MCF 10A (cell line): ENCODE measurements at regions of chr10 and their contacts with region 1.

Region 1: DNA sequence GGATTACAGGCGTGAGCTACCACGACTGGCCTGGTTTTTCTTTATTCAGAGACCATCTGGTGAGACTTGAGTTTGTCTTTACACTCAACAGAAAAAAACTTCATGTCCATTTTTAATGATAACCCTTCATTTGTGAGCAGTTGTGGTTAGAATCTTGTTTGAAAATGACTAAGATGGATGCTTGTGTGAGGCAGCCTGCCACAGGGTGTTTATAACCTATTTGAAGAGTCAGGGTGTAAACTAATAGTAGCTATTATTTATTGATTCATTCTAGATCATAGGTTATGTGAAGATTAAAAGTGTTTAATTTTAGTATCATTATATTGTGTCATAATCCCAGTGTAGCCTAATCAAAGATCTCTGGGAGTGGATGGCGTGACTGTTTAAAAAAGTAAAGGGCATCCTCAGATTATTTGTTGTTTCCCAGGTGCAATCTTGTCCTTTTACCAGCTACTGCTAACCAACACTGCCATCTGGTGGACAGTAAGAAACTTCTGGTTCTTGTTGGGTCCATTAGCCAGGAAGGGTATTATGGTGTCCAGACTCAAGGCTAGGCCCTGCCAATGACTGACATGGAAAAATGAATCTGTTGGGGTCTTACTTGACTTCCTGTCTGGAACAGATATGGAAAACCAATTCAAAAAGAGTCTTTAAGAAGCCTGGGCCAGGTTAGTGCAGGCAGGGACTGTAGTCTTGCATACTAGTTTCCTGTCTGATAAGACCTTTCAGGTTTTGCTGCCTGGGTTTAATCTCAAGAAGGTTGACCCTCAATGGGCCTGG is 24.9 kb downstream of the NRBF2 start:
- DNase-seq: peak; percentile 89
- H3K4me3 Mint-ChIP-seq: no peak overlapping the region
- H3K27ac Mint-ChIP-seq: no peak overlapping the region
- H3K4me1 Mint-ChIP-seq: no peaks in the 10 kb centered on the region
- H3K27me3 Mint-ChIP-seq: no peaks in the 10 kb centered on the region
- CTCF ChIP-seq: peak; percentile 67

Region 2: GRCh38 chr10:62437696-62438095 is 720.3 kb before region 1 on chr10:
- CTCF ChIA-PET with region 1: interaction called, 33 read pairs
- POLR2A ChIA-PET with region 1: interaction called, 3 read pairs
- intact Hi-C with region 1: loop called (anchors 1 kb)
- DNase-seq: peak; percentile 64
- H3K4me3 Mint-ChIP-seq: no peak overlapping the region
- H3K27ac Mint-ChIP-seq: no peak overlapping the region
- H3K4me1 Mint-ChIP-seq: peaks cover 22% of the 10 kb centered on the region
- H3K27me3 Mint-ChIP-seq: no peaks in the 10 kb centered on the region
- CTCF ChIP-seq: peak; percentile 69

Region 3: DNA sequence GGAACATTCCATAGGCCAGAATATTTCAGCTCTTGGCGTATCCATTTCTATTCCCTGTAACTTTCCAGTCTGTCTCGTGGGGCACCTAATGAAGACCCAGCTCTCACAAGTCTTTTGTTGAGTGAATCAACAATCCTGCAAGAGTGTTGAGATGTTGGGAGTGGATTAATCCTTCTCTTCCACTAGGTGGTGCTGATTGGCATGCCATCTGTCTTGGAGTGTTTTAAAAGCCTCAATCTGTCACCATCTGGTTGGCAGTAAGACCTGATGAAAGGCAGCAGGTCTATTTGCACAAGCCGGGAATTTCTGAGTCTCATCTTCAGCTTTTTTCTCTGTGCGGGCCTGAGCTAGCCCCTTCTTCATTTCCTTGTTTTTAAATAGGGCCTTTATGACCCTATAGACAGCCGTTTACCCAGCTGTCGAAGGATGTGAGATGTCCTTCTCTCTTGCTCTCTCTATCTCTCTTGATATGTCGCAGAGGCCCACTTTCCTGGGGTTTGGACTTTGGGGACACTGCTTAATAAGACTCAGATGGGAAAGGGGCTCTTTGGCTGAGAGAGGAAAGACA is 603.3 kb before region 1 on chr10:
- CTCF ChIA-PET with region 1: interaction called, 5 read pairs
- POLR2A ChIA-PET with region 1: no interaction called
- intact Hi-C with region 1: loop called (anchors 1 kb)
- DNase-seq: peak; percentile 53
- H3K4me3 Mint-ChIP-seq: no peak overlapping the region
- H3K27ac Mint-ChIP-seq: no peak overlapping the region
- H3K4me1 Mint-ChIP-seq: no peaks in the 10 kb centered on the region
- H3K27me3 Mint-ChIP-seq: peaks cover 11% of the 10 kb centered on the region
- CTCF ChIP-seq: peak; percentile 35

Region 4: DNA sequence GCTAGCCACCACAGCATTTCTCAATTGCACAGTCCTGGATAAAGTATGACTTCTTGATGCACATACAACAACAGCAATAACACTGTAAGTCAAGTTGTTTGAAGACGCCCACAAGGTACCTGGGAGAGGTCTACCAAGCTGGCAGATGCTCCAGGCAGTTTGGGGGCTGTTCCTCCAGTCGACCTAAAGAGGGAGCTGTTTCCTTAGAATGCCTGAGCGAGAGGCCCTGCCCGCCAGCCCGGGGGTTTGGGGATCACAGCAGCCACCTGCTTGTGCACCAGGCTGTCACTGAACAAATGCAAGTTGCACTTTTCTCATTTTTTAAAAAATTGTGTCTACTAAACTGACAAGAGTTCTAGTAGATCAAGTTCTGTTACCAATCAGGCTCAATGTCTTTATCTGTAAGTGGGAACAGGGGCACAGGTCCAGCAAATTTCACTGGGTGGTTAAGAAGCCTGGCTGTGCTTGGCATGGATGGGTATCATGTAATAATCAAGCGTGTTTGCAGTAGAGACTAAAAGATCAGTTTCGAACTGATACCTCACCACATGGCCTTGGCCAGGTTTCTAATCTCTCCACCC is 547.3 kb before region 1 on chr10:
- CTCF ChIA-PET with region 1: interaction called, 16 read pairs
- POLR2A ChIA-PET with region 1: no interaction called
- intact Hi-C with region 1: loop called (anchors 1 kb)
- DNase-seq: peak; percentile 75
- H3K4me3 Mint-ChIP-seq: no peak overlapping the region
- H3K27ac Mint-ChIP-seq: no peak overlapping the region
- H3K4me1 Mint-ChIP-seq: peaks cover 5% of the 10 kb centered on the region
- H3K27me3 Mint-ChIP-seq: no peaks in the 10 kb centered on the region
- CTCF ChIP-seq: peak; percentile 87

Region 5: DNA sequence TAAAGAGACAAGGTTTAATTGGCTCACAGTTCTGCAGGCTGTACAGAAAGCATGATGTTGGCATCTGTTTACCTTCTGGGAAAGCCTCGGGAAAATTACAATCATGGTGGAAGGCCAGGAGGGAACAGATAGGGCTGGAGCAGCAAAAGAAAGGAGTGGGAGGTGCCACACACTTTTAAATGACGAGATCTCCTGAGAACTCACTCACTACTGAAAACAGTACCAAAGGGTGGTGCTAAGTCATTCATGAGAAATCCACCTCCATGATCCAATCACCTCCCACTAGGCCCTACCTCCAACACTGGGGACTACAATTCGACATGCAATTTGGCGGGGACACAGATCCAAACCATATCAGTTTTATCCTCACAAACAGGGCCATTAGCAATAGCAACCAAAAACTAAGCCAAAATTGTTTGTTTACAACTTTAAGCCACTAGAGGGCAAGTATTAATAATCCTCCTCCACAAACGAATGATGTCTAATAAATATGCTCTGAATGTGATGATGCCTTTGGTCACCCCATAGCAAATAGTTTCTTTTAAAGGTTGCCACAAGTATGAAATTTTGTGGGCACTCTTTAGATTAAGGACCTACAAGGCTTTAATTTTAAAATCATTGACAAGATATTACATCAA is 154.1 kb before region 1 on chr10:
- CTCF ChIA-PET with region 1: interaction called, 4 read pairs
- POLR2A ChIA-PET with region 1: no interaction called
- intact Hi-C with region 1: loop called (anchors 2 kb)
- DNase-seq: peak; percentile 18
- H3K4me3 Mint-ChIP-seq: no peak overlapping the region
- H3K27ac Mint-ChIP-seq: no peak overlapping the region
- H3K4me1 Mint-ChIP-seq: peaks cover 18% of the 10 kb centered on the region
- H3K27me3 Mint-ChIP-seq: no peaks in the 10 kb centered on the region
- CTCF ChIP-seq: no peak

Region 6: DNA sequence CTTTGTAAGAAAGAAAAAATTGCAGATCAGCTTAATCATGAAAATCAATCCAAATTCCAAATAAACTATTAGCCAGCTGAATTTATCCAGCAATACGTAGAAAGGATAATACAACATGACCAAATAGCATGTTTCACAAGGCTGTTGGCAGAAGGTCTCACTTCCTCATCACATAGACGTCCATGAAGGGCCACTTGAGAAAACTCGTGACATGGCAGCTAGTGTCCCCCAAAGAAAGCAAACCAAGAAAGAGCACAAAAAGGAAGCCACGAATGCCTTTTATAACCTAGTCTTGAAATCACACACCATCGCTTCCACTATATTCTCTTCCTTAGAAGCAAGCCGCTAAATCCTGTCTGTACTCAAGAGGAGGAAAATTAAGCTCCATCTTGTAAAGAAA is 130.5 kb before region 1 on chr10:
- CTCF ChIA-PET with region 1: no interaction called
- POLR2A ChIA-PET with region 1: no interaction called
- intact Hi-C with region 1: no loop called
- DNase-seq: no peak
- H3K4me3 Mint-ChIP-seq: no peak overlapping the region
- H3K27ac Mint-ChIP-seq: no peak overlapping the region
- H3K4me1 Mint-ChIP-seq: no peaks in the 10 kb centered on the region
- H3K27me3 Mint-ChIP-seq: no peaks in the 10 kb centered on the region
- CTCF ChIP-seq: no peak

Region 7: DNA sequence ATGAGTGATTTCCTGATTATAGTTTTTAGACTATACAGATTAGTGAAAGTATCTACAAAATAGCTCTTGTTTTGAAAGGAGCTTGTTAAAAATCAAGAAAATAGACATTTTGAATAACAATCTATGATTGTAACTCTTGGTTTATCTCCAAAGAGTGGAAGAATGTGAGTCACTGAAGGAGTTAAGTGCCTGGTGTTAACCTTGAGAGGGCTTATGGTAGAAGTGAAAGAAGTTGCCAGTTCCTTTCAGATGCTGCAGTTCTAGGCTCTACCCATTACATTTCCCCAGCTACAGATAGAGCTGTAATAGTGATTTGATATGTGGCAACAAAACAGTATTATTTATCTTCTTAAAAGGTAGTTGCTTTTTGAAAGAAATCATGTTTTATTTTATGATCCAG is 12.3 kb before region 1 on chr10:
- CTCF ChIA-PET with region 1: interaction called, 51 read pairs
- POLR2A ChIA-PET with region 1: interaction called, 4 read pairs
- intact Hi-C with region 1: no loop called
- DNase-seq: no peak
- H3K4me3 Mint-ChIP-seq: no peak overlapping the region
- H3K27ac Mint-ChIP-seq: peak overlapping the region; percentile 42
- H3K4me1 Mint-ChIP-seq: peaks cover 10% of the 10 kb centered on the region
- H3K27me3 Mint-ChIP-seq: no peaks in the 10 kb centered on the region
- CTCF ChIP-seq: no peak

Region 8: DNA sequence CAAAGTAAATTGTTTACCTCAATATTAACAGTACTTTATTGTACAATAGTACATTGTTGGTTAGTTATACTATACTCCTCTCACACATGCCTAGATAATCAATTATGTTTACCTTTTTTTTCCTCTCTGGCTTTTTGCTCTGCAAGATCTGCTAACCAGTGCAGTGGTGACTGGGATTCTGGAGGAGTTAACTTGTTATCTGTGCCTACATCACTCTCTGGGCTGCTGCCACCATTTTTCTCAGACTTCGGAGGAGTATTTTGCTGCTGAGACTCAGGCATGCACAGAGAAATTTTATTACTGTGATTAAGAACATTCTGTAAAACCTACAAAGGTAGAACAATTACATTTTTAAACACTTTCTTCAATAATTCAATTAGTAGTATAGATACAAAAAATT is 34.8 kb after region 1 on chr10:
- CTCF ChIA-PET with region 1: no interaction called
- POLR2A ChIA-PET with region 1: no interaction called
- intact Hi-C with region 1: no loop called
- DNase-seq: no peak
- H3K4me3 Mint-ChIP-seq: no peak overlapping the region
- H3K27ac Mint-ChIP-seq: no peak overlapping the region
- H3K4me1 Mint-ChIP-seq: peaks cover 7% of the 10 kb centered on the region
- H3K27me3 Mint-ChIP-seq: no peaks in the 10 kb centered on the region
- CTCF ChIP-seq: no peak